A673 (cell line): ENCODE measurements at regions of chr13 and their contacts with region 1.

Region 1: GRCh38 chr13:24160454-24161009 is at the start of gene SPATA13:
- DNase-seq: peak; percentile 91
- H3K4me3 ChIP-seq: peak within 1 kb of the TSS; percentile 80
- H3K27ac ChIP-seq: peak within 1 kb of the TSS; percentile 74
- H3K4me1 ChIP-seq: peaks cover 10% of the 10 kb centered on the region
- H3K27me3 ChIP-seq: no peaks in the 10 kb centered on the region
- CTCF ChIP-seq: no peak
- total RNA-seq, gene SPATA13: 55.4 and 58.2 TPM in 2 replicates

Region 2: GRCh38 chr13:24203811-24204210 is 43.3 kb after region 1 on chr13:
- CTCF ChIA-PET with region 1: no interaction called
- POLR2A ChIA-PET with region 1: no interaction called
- intact Hi-C with region 1: loop called (anchors 5 kb)
- DNase-seq: peak; percentile 47
- H3K4me3 ChIP-seq: no peak overlapping the region
- H3K27ac ChIP-seq: no peak overlapping the region
- H3K4me1 ChIP-seq: peaks cover 20% of the 10 kb centered on the region
- H3K27me3 ChIP-seq: no peaks in the 10 kb centered on the region
- CTCF ChIP-seq: no peak